Lower lobe of right lung (tissue), 2 donors: ENCODE measurements at regions of chr14 and their contacts with region 1.

Region 1: GRCh38 chr14:23057757-23058653 is 685 bp upstream of the CDH24 start:
- DNase-seq: peak; percentile 89
- ATAC-seq: peak; percentile 87
- H3K4me3 ChIP-seq: peak overlapping the region; percentile 81
- H3K27ac ChIP-seq: peak overlapping the region; percentile 58
- H3K4me1 ChIP-seq: peaks cover 23% of the 10 kb centered on the region
- H3K27me3 ChIP-seq: no peaks in the 10 kb centered on the region
- CTCF ChIP-seq: peak; percentile 95

Region 2: DNA sequence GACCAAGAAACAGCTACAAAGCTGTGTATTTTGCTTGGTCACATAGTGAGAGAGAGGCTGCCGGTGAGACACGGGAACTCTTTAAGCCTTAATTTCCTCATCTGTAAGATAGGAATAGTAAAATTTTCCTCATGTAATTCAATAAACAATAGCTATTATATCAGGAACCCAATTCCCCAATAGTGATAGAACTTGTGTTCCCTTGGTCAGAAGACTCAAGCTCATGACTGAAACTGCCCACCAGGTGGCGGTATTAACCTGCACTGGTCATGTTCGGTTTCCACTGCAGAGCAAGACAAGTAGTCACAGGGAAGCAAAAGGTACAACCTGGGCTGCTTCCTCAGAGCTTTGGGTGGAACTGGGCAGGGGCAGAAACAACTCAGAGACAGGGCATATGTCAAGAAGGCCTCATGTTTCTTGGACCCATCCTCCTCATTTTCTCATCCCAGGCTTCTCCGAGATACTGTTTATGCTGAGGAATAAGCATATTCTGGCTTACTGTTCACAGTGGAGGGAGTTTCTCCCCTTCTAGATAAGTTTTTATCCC is 71.4 kb before region 1 on chr14:
- intact Hi-C with region 1: loop called (anchors 5 kb)
- DNase-seq: peak; percentile 87
- ATAC-seq: peak; percentile 49 to 72
- H3K4me3 ChIP-seq: no peak overlapping the region
- H3K27ac ChIP-seq: no peak overlapping the region
- H3K4me1 ChIP-seq: peaks cover 19% of the 10 kb centered on the region
- H3K27me3 ChIP-seq: peaks cover 6% of the 10 kb centered on the region
- CTCF ChIP-seq: peak; percentile 92